ENCODE measurements at regions of chr1 and their contacts with region 1.

Region 1: DNA sequence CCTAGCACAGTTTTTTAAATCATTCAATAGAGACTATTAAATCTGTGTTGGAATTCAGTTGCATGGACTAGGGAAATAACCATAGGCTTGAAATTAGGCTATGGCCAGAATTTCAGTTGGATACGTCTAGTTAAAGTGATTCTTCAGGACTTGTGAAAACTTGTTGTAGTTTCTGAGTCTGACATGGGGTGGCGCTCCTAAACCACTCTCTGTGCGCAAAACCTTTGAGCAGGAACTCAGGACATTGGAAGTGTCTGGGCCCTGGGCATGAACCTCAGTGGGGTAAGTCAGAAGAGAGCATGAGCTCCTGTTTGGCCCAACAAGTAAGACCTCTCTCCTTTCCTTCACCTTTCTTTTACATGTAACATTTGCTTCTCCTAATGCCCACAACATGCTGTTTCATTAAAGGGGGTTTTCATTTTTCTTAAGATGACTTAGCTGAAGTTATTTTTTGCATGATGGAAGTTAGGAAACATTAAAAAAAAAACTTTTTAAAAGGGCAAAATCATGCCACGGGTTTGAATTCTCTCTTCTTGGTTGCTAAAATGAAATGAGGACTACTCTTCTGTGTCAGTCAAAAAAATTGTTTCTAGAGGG is 17.1 kb upstream of the CCDC190 start:
- DNase-seq: peak; percentile 45 to 76
- H3K4me3 ChIP-seq: no peak overlapping the region
- H3K27ac ChIP-seq: no peak overlapping the region
- H3K4me1 ChIP-seq: peaks cover 0 to 17% (median under 1%) of the 10 kb centered on the region in 4 donors
- H3K27me3 ChIP-seq: no peaks in the 10 kb centered on the region
- CTCF ChIP-seq: peak; percentile 75 to 89

Region 2: GRCh38 chr1:163071405-163072255 is 193.5 kb after region 1 on chr1:
- intact Hi-C with region 1: loop called (anchors 2 kb)
- DNase-seq: peak; percentile 58 to 82
- H3K4me3 ChIP-seq: peak overlapping the region; percentile 12
- H3K27ac ChIP-seq: peak overlapping the region; percentile 20 to 56
- H3K4me1 ChIP-seq: peaks cover 0 to 37% (median 4%) of the 10 kb centered on the region in 4 donors
- H3K27me3 ChIP-seq: no peaks in the 10 kb centered on the region
- CTCF ChIP-seq: peak; percentile 62 to 64